Posterior vena cava (tissue), 2 donors: ENCODE measurements at regions of chr9 and their contacts with region 1.

Region 1: GRCh38 chr9:33816327-33817252 is at the start of gene UBE2R2:
- DNase-seq: peak; percentile 98
- total RNA-seq, gene UBE2R2: 33.0 to 37.1 TPM

Region 2: DNA sequence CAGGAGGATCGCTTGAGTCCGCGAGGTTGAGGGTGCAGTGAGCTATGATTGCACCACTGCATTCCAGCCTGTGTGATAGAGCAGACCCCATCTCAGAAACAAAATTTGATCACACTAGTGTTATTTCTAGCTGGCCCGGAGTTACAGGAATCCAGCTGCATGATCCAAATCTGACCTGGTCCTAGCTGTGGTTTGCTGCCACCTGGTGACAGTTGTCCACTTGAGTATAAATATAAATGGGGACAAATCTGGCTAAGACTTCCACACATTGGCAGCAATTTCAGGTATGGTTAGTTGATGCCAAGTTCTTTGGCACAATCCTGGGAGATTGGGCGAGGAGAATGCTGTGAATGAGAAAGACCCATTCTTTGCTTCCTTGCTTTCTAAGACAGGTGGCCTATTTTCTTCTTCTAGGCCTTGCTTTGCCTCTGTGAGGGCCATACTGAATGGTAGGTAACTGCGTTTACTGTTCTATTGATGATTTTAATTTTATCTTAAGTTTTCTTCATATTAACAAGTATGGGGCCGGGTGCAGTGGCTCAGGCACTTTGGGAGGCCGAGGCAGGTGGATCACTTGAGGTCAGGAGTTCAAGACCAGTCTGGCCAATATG is 35.7 kb after region 1 on chr9:
- intact Hi-C with region 1: loop called (anchors 2 to 5 kb)
- DNase-seq: no peak